ENCODE measurements at regions of chr4 and their contacts with region 1.

Region 1: DNA sequence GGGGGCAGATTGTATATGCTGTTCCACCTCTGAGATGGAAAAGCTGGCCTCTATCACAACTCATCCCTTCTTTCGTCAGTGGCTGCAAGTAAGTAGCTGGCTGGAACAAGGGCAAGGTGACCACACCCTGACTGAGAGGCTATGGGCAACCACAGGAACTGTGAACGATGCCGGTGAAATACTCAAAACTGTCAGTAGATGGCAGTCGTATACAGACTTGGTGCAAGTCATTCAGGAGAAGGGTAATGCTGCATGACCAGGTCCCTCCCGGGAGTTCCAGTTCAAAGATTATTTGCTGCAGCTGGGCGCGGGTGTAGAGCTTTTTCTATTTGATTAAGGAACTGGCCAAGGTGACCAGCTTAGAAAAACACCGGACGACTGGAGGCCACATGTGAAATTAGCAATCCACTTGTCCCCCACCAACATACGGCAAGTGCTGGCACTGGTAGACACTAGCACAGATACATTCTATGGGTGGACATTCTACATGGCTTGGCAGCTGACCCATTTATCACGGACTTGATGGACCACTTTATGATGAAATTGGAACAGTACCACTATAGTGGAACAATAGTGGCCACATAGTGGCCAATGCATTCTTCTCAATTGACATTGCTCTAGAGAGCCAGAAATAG is 726.7 kb downstream of the TRAM1L1 start:
- DNase-seq: peak; percentile 64 to 89
- H3K4me3 ChIP-seq: no peak overlapping the region
- H3K27ac ChIP-seq: no peak overlapping the region
- H3K4me1 ChIP-seq: no peaks in the 10 kb centered on the region
- H3K27me3 ChIP-seq: no peaks in the 10 kb centered on the region
- CTCF ChIP-seq: peak; percentile 42 to 80 (median 68)
- EP300 ChIP-seq: no peak
- POLR2A ChIP-seq: no peak
- RAD21 ChIP-seq: peak; percentile 88 to 92

Region 2: GRCh38 chr4:116374815-116375214 is 16.1 kb after region 1 on chr4:
- CTCF ChIA-PET with region 1: interaction called, 15 read pairs
- POLR2A ChIA-PET with region 1: no interaction called
- DNase-seq: no peak
- H3K4me3 ChIP-seq: no peak overlapping the region
- H3K27ac ChIP-seq: no peak overlapping the region
- H3K4me1 ChIP-seq: no peaks in the 10 kb centered on the region
- H3K27me3 ChIP-seq: no peaks in the 10 kb centered on the region
- CTCF ChIP-seq: no peak
- EP300 ChIP-seq: no peak
- POLR2A ChIP-seq: no peak
- RAD21 ChIP-seq: no peak

Measured in H1 (cell line).